Activated CD4-positive, alpha-beta T cell treated with anti-CD3 and anti-CD28 coated beads, Interleukin-2, amount 10 ng/mL, durations not matched to agents 24 days and 14 days (primary cell): ENCODE measurements at regions of chr5 and their contacts with region 1.

Region 1: DNA sequence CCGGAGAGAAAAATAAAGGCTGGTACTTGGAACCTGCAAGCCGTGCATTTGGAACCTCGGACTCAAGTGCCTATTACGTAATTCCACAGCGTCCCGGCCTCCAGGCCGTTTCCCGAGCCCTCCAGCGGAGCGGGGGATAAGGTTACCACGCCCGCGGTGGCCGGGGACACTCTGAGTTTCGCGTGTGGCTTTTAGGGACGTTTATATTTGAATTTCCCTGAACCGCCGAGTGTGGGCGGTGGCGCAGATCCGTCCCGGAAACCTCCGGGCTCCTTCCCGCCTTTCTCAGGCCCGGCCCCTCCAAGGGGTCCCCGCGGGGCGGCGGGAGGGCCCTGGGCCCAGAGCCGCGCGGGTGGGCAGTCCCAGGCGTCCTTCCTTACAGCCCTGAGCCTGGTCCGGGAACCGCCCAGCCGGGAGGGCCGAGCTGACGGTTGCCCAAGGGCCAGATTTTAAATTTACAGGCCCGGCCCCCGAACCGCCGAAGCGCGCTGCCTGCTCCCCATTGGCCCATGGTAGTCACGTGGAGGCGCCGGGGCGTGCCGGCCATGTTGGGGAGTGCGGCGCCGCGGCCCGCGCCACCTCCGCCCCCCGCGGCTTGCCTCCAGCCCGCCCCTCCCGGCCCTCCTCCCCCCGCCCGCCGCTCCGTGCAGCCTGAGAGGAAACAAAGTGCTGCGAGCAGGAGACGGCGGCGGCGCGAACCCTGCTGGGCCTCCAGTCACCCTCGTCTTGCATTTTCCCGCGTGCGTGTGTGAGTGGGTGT is at the start of gene LMNB1:
- DNase-seq: peak; percentile 99
- H3K4me3 Mint-ChIP-seq: peak within 1 kb of the TSS; percentile 97
- H3K27ac Mint-ChIP-seq: peak within 1 kb of the TSS; percentile 98
- H3K4me1 Mint-ChIP-seq: peaks cover 30% of the 10 kb centered on the region
- H3K27me3 Mint-ChIP-seq: no peaks in the 10 kb centered on the region
- total RNA-seq, gene LMNB1: 223 and 225 TPM in 2 replicates

Region 2: DNA sequence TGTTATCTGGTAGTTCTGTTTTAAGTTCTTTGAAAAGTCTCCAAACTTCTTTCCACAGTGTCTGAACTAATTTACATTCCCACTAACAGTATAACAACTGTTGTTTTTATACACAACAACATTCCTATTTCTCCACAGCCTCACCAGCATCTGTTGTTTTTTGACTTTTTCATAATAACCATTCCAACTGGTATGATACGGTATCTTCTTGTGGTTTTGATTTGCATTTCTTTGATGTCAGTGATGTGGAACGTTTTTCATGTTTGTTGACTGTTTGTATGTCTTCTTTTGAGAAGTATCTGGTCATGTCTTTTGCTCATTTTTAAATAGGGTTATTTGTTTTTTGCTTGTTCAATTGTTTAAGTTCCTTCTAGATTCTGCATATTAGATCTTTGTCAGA is 366.1 kb before region 1 on chr5:
- intact Hi-C with region 1: no loop called
- DNase-seq: no peak
- H3K4me3 Mint-ChIP-seq: no peak overlapping the region
- H3K27ac Mint-ChIP-seq: no peak overlapping the region
- H3K4me1 Mint-ChIP-seq: peaks cover 5% of the 10 kb centered on the region
- H3K27me3 Mint-ChIP-seq: peaks cover 21% of the 10 kb centered on the region

Region 3: GRCh38 chr5:126531543-126532120 is 245.0 kb before region 1 on chr5:
- intact Hi-C with region 1: no loop called
- DNase-seq: no peak
- H3K4me3 Mint-ChIP-seq: no peak overlapping the region
- H3K27ac Mint-ChIP-seq: no peak overlapping the region
- H3K4me1 Mint-ChIP-seq: no peaks in the 10 kb centered on the region
- H3K27me3 Mint-ChIP-seq: no peaks in the 10 kb centered on the region

Region 4: DNA sequence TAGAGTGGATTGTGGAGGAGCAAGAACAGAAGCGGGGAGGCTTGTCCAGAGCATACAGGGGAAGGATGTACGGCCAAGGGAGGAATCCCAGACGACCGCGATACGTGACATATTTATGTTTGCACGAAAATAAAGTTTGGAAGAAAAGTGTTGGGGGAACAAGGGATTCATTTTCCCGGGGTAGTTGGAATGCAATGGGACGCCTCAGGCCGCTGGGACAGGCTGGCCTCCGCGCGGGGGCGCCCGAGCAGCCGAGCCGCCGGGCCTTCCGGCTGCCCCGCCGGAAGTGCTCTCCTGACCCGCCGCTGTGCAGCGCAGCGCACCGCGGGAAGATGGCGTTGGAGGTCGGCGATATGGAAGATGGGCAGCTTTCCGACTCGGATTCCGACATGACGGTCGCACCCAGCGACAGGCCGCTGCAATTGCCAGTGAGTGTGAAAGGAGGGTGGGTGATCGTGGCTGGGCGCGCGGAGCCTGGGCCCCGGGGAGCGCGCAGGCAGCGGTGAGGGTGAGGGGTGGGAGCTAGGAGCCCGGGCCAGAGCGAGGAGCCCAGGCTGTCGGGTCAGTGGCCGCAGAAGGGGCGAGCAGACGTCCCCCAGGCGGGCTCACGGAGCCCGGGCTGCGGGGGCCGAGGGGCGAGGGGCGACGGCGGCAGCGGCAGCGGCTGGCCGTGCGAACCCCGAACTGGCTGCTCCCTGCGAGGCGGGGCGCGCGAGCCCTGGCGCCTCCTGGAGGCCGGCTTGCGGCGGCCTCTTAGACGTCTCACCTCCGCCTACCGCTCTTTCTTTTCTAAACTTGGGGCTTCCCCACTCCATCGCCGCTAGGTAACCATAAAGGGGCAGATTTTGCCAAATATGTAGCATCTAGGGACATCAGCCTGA is 175.8 kb before region 1 on chr5 and contains the start of gene PHAX:
- intact Hi-C with region 1: loop called (anchors 1 kb)
- DNase-seq: peak; percentile 94
- H3K4me3 Mint-ChIP-seq: peak within 1 kb of the TSS; percentile 96
- H3K27ac Mint-ChIP-seq: peak within 1 kb of the TSS; percentile 98
- H3K4me1 Mint-ChIP-seq: peaks cover 24% of the 10 kb centered on the region
- H3K27me3 Mint-ChIP-seq: peaks cover 11% of the 10 kb centered on the region
- total RNA-seq, gene PHAX: 50.2 and 51.7 TPM in 2 replicates

Region 5: DNA sequence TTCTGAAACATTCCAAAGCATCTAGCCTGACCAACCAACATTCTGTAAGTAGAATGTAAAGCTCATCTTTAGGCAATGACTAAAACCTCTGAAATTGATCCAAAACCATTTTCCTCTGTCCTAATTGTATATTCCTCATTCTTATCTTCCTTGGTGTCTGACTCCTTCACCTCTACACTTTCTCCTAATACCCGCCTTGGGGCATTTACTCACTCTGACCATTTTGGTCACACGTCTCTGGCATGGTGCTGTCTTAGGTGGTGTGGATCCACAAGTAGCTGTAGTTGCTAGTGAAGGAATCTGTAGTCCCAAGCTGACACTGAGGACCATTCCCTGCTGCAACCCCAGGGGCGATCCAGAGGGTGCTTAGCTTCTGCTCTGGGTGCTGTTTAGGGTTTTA is 40.5 kb before region 1 on chr5:
- intact Hi-C with region 1: loop called (anchors 1 kb)
- DNase-seq: no peak
- H3K4me3 Mint-ChIP-seq: no peak overlapping the region
- H3K27ac Mint-ChIP-seq: no peak overlapping the region
- H3K4me1 Mint-ChIP-seq: peaks cover 3% of the 10 kb centered on the region
- H3K27me3 Mint-ChIP-seq: peaks cover 3% of the 10 kb centered on the region

Region 6: DNA sequence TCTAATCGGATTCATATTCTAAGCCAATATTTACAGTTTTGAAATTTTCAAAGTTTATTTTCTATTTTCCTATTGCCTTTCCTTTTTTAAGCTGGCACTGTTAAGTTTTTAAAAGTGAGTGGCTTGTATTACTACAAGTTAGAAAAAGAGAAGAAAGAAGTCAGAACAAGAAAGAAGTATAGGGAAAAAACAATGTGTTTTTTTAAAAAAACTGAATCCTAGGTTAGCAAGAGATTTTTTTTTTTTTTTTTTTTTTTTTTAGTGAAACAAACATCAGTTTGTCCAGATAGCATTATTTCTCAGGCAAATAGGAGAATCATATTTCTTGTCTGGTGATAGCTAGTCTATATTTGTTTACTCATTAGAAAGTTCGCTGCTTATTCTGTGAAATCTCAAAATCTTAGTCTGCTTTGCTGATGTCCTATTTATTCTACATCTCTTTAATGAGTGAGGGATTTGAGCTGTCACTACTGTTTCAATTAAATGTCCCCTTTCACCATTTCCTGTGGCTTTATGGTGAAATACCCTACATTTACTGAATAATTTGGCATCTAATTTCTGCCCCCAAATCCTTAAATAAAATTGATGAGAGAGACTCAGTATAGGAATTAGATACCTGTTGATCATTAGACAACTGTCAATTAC is 18.8 kb before region 1 on chr5:
- intact Hi-C with region 1: loop called (anchors 1 kb)
- DNase-seq: no peak
- H3K4me3 Mint-ChIP-seq: peak overlapping the region; percentile 61
- H3K27ac Mint-ChIP-seq: peak overlapping the region; percentile 89
- H3K4me1 Mint-ChIP-seq: peaks cover 38% of the 10 kb centered on the region
- H3K27me3 Mint-ChIP-seq: no peaks in the 10 kb centered on the region

Region 7: GRCh38 chr5:126818736-126819135 is 42.1 kb after region 1 on chr5:
- intact Hi-C with region 1: no loop called
- DNase-seq: no peak
- H3K4me3 Mint-ChIP-seq: no peak overlapping the region
- H3K27ac Mint-ChIP-seq: no peak overlapping the region
- H3K4me1 Mint-ChIP-seq: peaks cover 21% of the 10 kb centered on the region
- H3K27me3 Mint-ChIP-seq: no peaks in the 10 kb centered on the region

Region 8: DNA sequence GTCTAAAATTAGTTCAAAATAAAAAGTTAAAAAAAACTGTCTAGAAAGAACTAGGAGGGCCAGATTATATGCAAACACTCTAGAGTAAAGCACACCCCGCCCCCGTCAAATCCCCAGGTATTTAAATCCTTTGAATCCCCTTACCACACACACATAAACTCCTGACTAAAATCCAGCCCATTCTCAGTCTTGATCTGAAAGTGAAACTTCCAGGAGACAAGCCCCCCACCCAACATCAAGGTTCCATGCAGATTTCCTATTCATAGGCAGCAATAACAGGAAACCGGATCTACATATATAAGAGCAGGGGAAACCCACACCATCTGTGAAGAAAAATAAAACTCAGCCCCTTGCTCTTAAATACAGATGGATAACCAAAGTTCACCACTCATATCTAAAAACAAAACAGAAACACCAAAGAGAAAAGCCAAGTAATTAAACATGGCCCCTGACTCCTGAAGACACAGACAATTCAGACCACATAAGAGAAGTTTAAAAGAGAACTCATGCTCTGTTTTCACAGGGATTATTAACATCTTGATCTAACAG is 211.4 kb after region 1 on chr5:
- intact Hi-C with region 1: loop called (anchors 5 kb)
- DNase-seq: peak; percentile 80
- H3K4me3 Mint-ChIP-seq: peak overlapping the region; percentile 60
- H3K27ac Mint-ChIP-seq: peak overlapping the region; percentile 87
- H3K4me1 Mint-ChIP-seq: peaks cover 19% of the 10 kb centered on the region
- H3K27me3 Mint-ChIP-seq: no peaks in the 10 kb centered on the region

Region 9: GRCh38 chr5:127153031-127153430 is 376.4 kb after region 1 on chr5:
- intact Hi-C with region 1: no loop called
- DNase-seq: no peak
- H3K4me3 Mint-ChIP-seq: no peak overlapping the region
- H3K27ac Mint-ChIP-seq: no peak overlapping the region
- H3K4me1 Mint-ChIP-seq: no peaks in the 10 kb centered on the region
- H3K27me3 Mint-ChIP-seq: peaks cover 4% of the 10 kb centered on the region

Region 10: GRCh38 chr5:127313847-127314473 is 537.3 kb after region 1 on chr5:
- intact Hi-C with region 1: loop called (anchors 10 kb)
- DNase-seq: peak; percentile 90
- H3K4me3 Mint-ChIP-seq: no peak overlapping the region
- H3K27ac Mint-ChIP-seq: no peak overlapping the region
- H3K4me1 Mint-ChIP-seq: no peaks in the 10 kb centered on the region
- H3K27me3 Mint-ChIP-seq: peaks cover 22% of the 10 kb centered on the region